Sigmoid colon (tissue), 7 donors: ENCODE measurements at regions of chr15 and their contacts with region 1.

Region 1: DNA sequence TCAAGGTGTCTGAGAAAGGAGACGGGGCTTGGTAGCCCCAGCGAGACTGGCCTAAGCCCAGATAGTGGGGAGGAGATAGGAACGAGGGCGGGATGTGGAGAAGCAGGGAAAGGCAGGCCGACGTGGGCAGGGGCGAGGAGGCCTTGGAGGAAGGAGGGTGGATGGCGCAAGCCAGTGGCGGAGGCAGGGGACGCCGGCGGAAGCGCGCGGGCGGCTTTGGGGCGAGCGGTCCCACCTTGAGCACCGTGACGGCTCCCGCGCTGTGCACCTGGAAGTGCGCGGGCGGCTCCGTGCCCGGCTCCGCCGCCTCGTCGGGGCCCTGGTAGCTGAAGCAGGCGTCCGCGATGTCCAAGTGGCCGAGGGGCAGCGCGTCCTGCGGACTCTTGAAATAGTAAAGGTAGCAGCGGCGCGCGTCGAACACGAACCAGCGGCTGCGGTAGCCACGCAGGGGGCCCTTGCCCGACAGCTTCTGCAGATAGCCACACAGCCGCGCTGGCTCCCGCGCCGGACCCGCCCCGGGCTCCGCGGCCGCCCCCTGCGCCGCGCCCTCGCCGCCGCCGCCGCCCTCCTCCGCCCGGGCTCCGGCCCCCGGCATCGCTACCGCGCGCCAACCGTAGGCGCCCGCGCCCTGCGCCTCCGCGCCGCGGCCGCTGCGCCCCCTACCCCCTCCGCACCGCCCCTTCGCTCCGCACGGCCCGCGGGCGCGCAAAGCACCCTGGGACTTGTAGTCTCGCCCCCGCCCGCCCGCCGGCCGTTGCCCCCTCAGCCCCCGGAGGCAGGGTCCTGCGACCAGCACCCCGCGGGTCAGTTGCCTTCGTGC is at the start of gene TBC1D2B:
- DNase-seq: peak; percentile 82
- H3K4me3 ChIP-seq: peak within 1 kb of the TSS; percentile 69 to 97 (median 95)
- H3K27ac ChIP-seq: peak within 1 kb of the TSS; percentile 90 to 96 (median 92)
- H3K4me1 ChIP-seq: peaks cover 0 to 48% (median 39%) of the 10 kb centered on the region in 4 donors
- H3K27me3 ChIP-seq: no peaks in the 10 kb centered on the region
- CTCF ChIP-seq: peak in 1 of 4 experiments; percentile 8
- EP300 ChIP-seq: no peak
- POLR2A ChIP-seq: no peak
- total RNA-seq, gene TBC1D2B: 25.3 to 47.1 (median 37.6) TPM

Region 2: GRCh38 chr15:78007911-78008886 is 69.1 kb before region 1 on chr15:
- intact Hi-C with region 1: loop called (anchors 2 kb)
- DNase-seq: peak; percentile 94
- H3K4me3 ChIP-seq: no peak overlapping the region
- H3K27ac ChIP-seq: peak overlapping the region; percentile 44 to 78 (median 60)
- H3K4me1 ChIP-seq: peaks cover 0 to 54% (median 51%) of the 10 kb centered on the region in 4 donors
- H3K27me3 ChIP-seq: no peaks in the 10 kb centered on the region
- CTCF ChIP-seq: no peak
- EP300 ChIP-seq: no peak
- POLR2A ChIP-seq: no peak

Region 3: DNA sequence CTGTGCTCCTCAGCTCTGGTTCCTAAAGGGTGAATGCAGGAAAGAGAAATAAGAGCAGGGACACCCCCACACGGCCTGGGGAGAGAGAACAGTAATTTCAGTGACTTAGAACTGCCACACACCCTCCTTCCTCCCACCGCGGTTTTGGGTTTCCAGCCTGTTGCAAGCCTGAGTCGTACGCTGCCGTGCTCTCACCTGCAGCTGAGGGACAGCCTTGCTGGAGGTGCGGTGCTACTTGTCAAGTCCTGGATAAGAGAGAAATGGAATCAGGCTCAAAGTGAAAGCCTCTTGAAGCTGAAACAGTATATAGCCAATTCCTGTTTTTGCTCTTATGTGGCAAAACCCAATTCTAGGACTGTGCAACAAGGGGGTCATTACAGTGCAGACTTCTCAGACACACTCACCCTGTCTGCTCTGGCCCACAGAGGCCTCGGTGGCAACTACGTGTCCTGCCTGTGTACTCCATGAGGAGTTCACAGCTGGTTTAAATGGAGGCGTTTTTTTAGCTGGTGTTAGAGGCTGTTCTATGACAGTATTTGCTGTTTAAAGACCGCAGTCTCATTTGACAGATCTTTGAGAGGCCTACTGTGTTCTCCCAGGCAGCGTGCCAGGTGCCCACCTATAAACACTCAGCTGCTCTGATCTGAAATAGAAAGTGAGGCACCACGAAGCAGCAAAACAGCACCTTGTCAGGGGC is 42.6 kb before region 1 on chr15:
- intact Hi-C with region 1: loop called (anchors 5 kb)
- DNase-seq: no peak
- H3K4me3 ChIP-seq: peak overlapping the region in 1 of 4 donors; percentile 15
- H3K27ac ChIP-seq: peak overlapping the region; percentile 62 to 81 (median 77)
- H3K4me1 ChIP-seq: peaks cover 0 to 54% (median 31%) of the 10 kb centered on the region in 4 donors
- H3K27me3 ChIP-seq: no peaks in the 10 kb centered on the region
- CTCF ChIP-seq: no peak
- EP300 ChIP-seq: no peak
- POLR2A ChIP-seq: no peak